MCF 10A (cell line): ENCODE measurements at regions of chr15 and their contacts with region 1.

Region 1: DNA sequence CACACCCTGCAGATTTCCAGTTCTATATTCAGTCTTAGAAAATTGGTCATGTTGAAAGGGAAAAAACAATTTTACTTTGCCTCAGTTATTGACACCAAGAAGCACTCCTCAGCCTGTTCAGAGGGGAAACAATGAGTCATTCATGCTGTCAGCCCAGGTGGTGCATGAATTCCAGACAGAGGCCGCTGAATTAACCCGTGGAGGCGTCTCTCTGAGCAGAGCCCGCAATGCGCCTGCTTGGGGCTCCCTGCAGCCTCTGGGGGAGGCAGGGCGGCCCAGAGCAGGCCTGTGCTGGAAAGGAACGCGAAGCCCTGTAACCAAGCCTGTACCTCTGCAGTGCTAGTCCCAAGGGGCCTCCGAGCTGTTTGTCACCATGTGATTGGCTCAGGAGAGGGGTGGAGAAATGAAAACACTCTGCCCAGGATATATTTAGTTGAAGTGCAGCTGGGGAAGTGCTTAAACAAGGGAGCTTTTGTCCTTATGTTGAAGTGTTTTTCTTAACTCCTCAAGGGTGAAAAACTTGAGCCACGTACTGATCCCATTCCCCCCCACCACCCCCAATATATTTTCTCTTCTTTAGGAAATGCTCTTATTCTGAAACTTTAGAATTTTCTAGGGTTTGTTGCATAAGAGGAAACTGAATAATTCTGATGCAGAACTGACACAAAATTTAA is 68.3 kb upstream of the CHD2 start:
- DNase-seq: peak; percentile 95
- H3K4me3 Mint-ChIP-seq: peak overlapping the region; percentile 60
- H3K27ac Mint-ChIP-seq: peak overlapping the region; percentile 95
- H3K4me1 Mint-ChIP-seq: peaks cover 5% of the 10 kb centered on the region
- H3K27me3 Mint-ChIP-seq: no peaks in the 10 kb centered on the region
- CTCF ChIP-seq: no peak

Region 2: DNA sequence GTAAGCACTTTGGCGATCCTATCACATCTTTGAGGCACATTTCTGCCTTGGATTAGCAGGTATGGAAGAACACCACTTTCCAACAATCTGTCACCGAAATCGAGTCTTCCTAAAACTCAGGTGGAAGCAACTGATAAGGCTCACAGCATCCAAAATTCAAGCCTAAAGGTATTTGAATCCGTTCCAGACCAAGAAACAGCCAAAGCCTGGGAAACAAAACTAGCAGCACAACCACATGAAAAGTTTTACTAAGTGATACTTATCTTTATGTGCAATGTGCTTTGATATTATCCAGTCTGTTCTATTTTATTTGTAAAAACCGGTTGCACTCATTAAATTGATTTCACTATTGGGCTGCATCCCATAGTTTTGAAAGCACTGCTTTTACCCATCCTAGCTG is 135.7 kb before region 1 on chr15:
- CTCF ChIA-PET with region 1: no interaction called
- POLR2A ChIA-PET with region 1: no interaction called
- intact Hi-C with region 1: no loop called
- DNase-seq: no peak
- H3K4me3 Mint-ChIP-seq: no peak overlapping the region
- H3K27ac Mint-ChIP-seq: no peak overlapping the region
- H3K4me1 Mint-ChIP-seq: no peaks in the 10 kb centered on the region
- H3K27me3 Mint-ChIP-seq: peaks cover 29% of the 10 kb centered on the region
- CTCF ChIP-seq: no peak

Region 3: GRCh38 chr15:92820236-92821021 is 11.4 kb before region 1 on chr15:
- CTCF ChIA-PET with region 1: interaction called, 26 read pairs
- POLR2A ChIA-PET with region 1: interaction called, 231 read pairs
- intact Hi-C with region 1: no loop called
- DNase-seq: peak; percentile 91
- H3K4me3 Mint-ChIP-seq: peak overlapping the region; percentile 72
- H3K27ac Mint-ChIP-seq: peak overlapping the region; percentile 98
- H3K4me1 Mint-ChIP-seq: peaks cover 25% of the 10 kb centered on the region
- H3K27me3 Mint-ChIP-seq: no peaks in the 10 kb centered on the region
- CTCF ChIP-seq: no peak

Region 4: GRCh38 chr15:92868992-92869988 is 37.5 kb after region 1 on chr15:
- CTCF ChIA-PET with region 1: interaction called, 3 read pairs
- POLR2A ChIA-PET with region 1: interaction called, 107 read pairs
- intact Hi-C with region 1: no loop called
- DNase-seq: peak; percentile 81
- H3K4me3 Mint-ChIP-seq: peak overlapping the region; percentile 48
- H3K27ac Mint-ChIP-seq: peak overlapping the region; percentile 80
- H3K4me1 Mint-ChIP-seq: peaks cover 24% of the 10 kb centered on the region
- H3K27me3 Mint-ChIP-seq: no peaks in the 10 kb centered on the region
- CTCF ChIP-seq: no peak

Region 5: DNA sequence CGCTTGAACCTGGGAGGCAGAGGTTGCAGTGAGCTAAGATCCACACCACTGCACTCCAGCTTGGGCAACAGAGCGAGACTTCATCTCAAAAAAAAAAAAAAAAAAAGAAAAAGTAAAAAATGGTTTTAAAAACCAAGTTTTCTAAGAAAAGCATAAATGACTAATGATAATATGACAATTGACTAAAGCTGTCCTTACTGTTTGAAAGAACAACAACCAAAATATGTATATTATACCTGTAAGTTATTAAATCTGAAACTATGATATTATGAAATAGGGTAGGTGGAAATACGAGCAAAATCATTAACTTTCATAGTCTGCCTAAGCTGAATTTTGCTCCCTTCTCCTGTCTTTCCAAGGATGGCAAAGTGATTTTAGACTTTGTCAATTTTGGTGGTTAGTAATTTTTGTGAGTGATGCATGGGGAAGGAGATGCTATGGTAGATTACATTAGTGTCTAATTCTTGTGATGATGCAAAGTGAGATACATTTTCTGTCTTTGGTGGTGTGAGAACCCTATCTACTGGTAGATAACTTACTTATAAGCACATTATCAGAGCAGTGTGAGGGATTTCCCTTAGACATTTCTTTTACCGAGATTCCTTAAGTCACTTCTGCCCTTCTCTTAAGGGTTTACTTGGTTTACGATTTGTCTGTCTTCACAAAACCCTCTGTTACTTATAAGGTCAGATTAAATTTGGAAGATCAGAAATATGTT is 57.8 kb after region 1 on chr15:
- CTCF ChIA-PET with region 1: interaction called, 5 read pairs
- POLR2A ChIA-PET with region 1: interaction called, 299 read pairs
- intact Hi-C with region 1: no loop called
- DNase-seq: no peak
- H3K4me3 Mint-ChIP-seq: peak overlapping the region; percentile 36
- H3K27ac Mint-ChIP-seq: no peak overlapping the region
- H3K4me1 Mint-ChIP-seq: peaks cover 13% of the 10 kb centered on the region
- H3K27me3 Mint-ChIP-seq: no peaks in the 10 kb centered on the region
- CTCF ChIP-seq: no peak

Region 6: GRCh38 chr15:92903941-92904831 is 72.4 kb after region 1 on chr15:
- CTCF ChIA-PET with region 1: interaction called, 4 read pairs
- POLR2A ChIA-PET with region 1: interaction called, 108 read pairs
- intact Hi-C with region 1: no loop called
- DNase-seq: peak; percentile 98
- H3K4me3 Mint-ChIP-seq: peak overlapping the region; percentile 91
- H3K27ac Mint-ChIP-seq: peak overlapping the region; percentile 99
- H3K4me1 Mint-ChIP-seq: peaks cover 35% of the 10 kb centered on the region
- H3K27me3 Mint-ChIP-seq: no peaks in the 10 kb centered on the region
- CTCF ChIP-seq: no peak

Region 7: GRCh38 chr15:94125156-94125555 is 1293.4 kb after region 1 on chr15:
- CTCF ChIA-PET with region 1: no interaction called
- POLR2A ChIA-PET with region 1: no interaction called
- intact Hi-C with region 1: no loop called
- DNase-seq: no peak
- H3K4me3 Mint-ChIP-seq: no peak overlapping the region
- H3K27ac Mint-ChIP-seq: no peak overlapping the region
- H3K4me1 Mint-ChIP-seq: no peaks in the 10 kb centered on the region
- H3K27me3 Mint-ChIP-seq: peaks cover 7% of the 10 kb centered on the region
- CTCF ChIP-seq: no peak